Activated CD8-positive, alpha-beta memory T cell treated with anti-CD3 and anti-CD28 coated beads, Interleukin-2, amount 10 ng/mL, durations not matched to agents 7 days and 5 days (primary cell): ENCODE measurements at regions of chr5 and their contacts with region 1.

Region 1: GRCh38 chr5:1140171-1140817 is 28.4 kb upstream of the SLC12A7 start:
- DNase-seq: peak; percentile 77
- ATAC-seq: peak; percentile 79
- H3K4me3 Mint-ChIP-seq: no peak overlapping the region
- H3K27ac Mint-ChIP-seq: peak overlapping the region; percentile 49
- H3K4me1 Mint-ChIP-seq: no peaks in the 10 kb centered on the region
- H3K27me3 Mint-ChIP-seq: no peaks in the 10 kb centered on the region

Region 2: GRCh38 chr5:932628-933250 is 207.6 kb before region 1 on chr5:
- CTCF ChIA-PET with region 1: interaction called, 14 read pairs
- DNase-seq: peak; percentile 38
- ATAC-seq: no peak
- H3K4me3 Mint-ChIP-seq: no peak overlapping the region
- H3K27ac Mint-ChIP-seq: no peak overlapping the region
- H3K4me1 Mint-ChIP-seq: peaks cover 19% of the 10 kb centered on the region
- H3K27me3 Mint-ChIP-seq: peaks cover 3% of the 10 kb centered on the region

Region 3: GRCh38 chr5:1004461-1005248 is 135.6 kb before region 1 on chr5:
- CTCF ChIA-PET with region 1: interaction called, 10 read pairs
- DNase-seq: peak; percentile 50
- ATAC-seq: peak; percentile 50
- H3K4me3 Mint-ChIP-seq: no peak overlapping the region
- H3K27ac Mint-ChIP-seq: no peak overlapping the region
- H3K4me1 Mint-ChIP-seq: peaks cover 18% of the 10 kb centered on the region
- H3K27me3 Mint-ChIP-seq: peaks cover 64% of the 10 kb centered on the region

Region 4: GRCh38 chr5:1190837-1191239 is 50.5 kb after region 1 on chr5:
- CTCF ChIA-PET with region 1: no interaction called
- DNase-seq: no peak
- ATAC-seq: no peak
- H3K4me3 Mint-ChIP-seq: no peak overlapping the region
- H3K27ac Mint-ChIP-seq: no peak overlapping the region
- H3K4me1 Mint-ChIP-seq: no peaks in the 10 kb centered on the region
- H3K27me3 Mint-ChIP-seq: peaks cover 23% of the 10 kb centered on the region

Region 5: GRCh38 chr5:1246711-1247431 is 106.6 kb after region 1 on chr5:
- CTCF ChIA-PET with region 1: no interaction called
- DNase-seq: no peak
- ATAC-seq: no peak
- H3K4me3 Mint-ChIP-seq: no peak overlapping the region
- H3K27ac Mint-ChIP-seq: no peak overlapping the region
- H3K4me1 Mint-ChIP-seq: no peaks in the 10 kb centered on the region
- H3K27me3 Mint-ChIP-seq: peaks cover 4% of the 10 kb centered on the region